ENCODE measurements at regions of chr11 and their contacts with region 1.

Region 1: GRCh38 chr11:1882519-1883238 is 9.0 kb downstream of the PRR33 start:
- DNase-seq: peak; percentile 69 to 79 (median 72)
- H3K4me3 ChIP-seq: no peak overlapping the region
- H3K4me3 Mint-ChIP-seq: no peak overlapping the region
- H3K27ac ChIP-seq: peak overlapping the region; percentile 20
- H3K27ac Mint-ChIP-seq: peak overlapping the region in 3 of 7 donors; percentile 47 to 64 (median 61)
- H3K4me1 ChIP-seq: peaks cover 23% of the 10 kb centered on the region
- H3K4me1 Mint-ChIP-seq: peaks cover 3 to 16% (median 8%) of the 10 kb centered on the region in 4 donors
- H3K27me3 ChIP-seq: no peaks in the 10 kb centered on the region
- H3K27me3 Mint-ChIP-seq: no peaks in the 10 kb centered on the region

Region 2: GRCh38 chr11:1335811-1336761 is 546.6 kb before region 1 on chr11:
- CTCF ChIA-PET with region 1: no interaction called
- POLR2A ChIA-PET with region 1: no interaction called
- intact Hi-C with region 1: no loop called
- DNase-seq: peak; percentile 44 to 75 (median 55)
- H3K4me3 ChIP-seq: peak overlapping the region; percentile 38 to 39
- H3K4me3 Mint-ChIP-seq: peak overlapping the region; percentile 71 to 89 (median 80)
- H3K27ac ChIP-seq: peak overlapping the region; percentile 27
- H3K27ac Mint-ChIP-seq: peak overlapping the region; percentile 49 to 92 (median 79)
- H3K4me1 ChIP-seq: peaks cover 12% of the 10 kb centered on the region
- H3K4me1 Mint-ChIP-seq: peaks cover 9 to 12% (median 11%) of the 10 kb centered on the region in 4 donors
- H3K27me3 ChIP-seq: no peaks in the 10 kb centered on the region
- H3K27me3 Mint-ChIP-seq: peaks cover 0 to 3% of the 10 kb centered on the region in 2 donors

Region 3: GRCh38 chr11:1844221-1845094 is 38.2 kb before region 1 on chr11:
- CTCF ChIA-PET with region 1: interaction called, 12 read pairs
- POLR2A ChIA-PET with region 1: interaction called, 189 read pairs
- intact Hi-C with region 1: no loop called
- DNase-seq: peak; percentile 41 to 77 (median 44)
- H3K4me3 ChIP-seq: peak overlapping the region; percentile 21 to 60
- H3K4me3 Mint-ChIP-seq: peak overlapping the region; percentile 64 to 90 (median 80)
- H3K27ac ChIP-seq: peak overlapping the region; percentile 43
- H3K27ac Mint-ChIP-seq: peak overlapping the region; percentile 87 to 97 (median 94)
- H3K4me1 ChIP-seq: peaks cover 64% of the 10 kb centered on the region
- H3K4me1 Mint-ChIP-seq: peaks cover 34 to 75% (median 49%) of the 10 kb centered on the region in 4 donors
- H3K27me3 ChIP-seq: no peaks in the 10 kb centered on the region
- H3K27me3 Mint-ChIP-seq: no peaks in the 10 kb centered on the region

Region 4: DNA sequence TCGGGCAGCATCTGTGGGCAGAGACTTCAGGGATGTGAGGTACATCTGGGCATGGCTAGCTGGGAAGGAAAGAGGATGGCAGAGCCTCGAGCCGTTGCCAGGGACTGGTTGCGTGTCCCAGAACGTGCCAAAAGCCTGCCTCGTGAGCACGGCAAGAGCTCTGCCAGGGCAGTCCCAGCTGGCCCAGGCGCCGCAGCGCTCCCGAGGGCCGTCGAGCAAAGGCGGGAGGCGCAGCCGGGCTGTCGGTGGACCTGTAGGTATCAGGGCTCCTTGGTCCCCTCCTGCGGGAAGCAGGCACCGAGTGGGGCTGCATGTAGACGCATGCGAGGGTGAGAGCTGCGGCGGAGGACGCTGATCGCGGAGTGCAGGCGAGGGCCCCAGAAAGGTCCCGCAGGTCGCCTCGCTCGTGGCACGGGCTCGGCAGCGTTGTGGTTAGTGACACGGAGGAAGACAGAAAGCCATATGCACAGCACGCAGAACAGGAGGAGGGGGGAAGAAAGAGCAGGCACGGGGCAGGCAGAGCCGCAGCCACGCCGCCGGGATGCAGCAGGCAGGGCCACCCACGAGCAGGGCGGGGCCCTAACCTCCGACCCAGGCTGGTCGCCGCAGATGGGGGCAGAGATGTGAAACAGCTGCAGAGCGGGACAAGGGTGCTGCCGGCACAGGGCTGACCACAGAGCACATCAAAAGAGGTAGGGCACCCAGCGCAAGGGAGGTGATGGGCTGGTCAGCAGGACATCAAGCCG is 11.8 kb before region 1 on chr11:
- CTCF ChIA-PET with region 1: interaction called, 10 read pairs
- POLR2A ChIA-PET with region 1: interaction called, 12 read pairs
- intact Hi-C with region 1: no loop called
- DNase-seq: peak; percentile 55 to 75 (median 65)
- H3K4me3 ChIP-seq: no peak overlapping the region
- H3K4me3 Mint-ChIP-seq: peak overlapping the region; percentile 72 to 91 (median 82)
- H3K27ac ChIP-seq: peak overlapping the region; percentile 28
- H3K27ac Mint-ChIP-seq: peak overlapping the region; percentile 84 to 97 (median 91)
- H3K4me1 ChIP-seq: peaks cover 65% of the 10 kb centered on the region
- H3K4me1 Mint-ChIP-seq: peaks cover 30 to 74% (median 54%) of the 10 kb centered on the region in 4 donors
- H3K27me3 ChIP-seq: no peaks in the 10 kb centered on the region
- H3K27me3 Mint-ChIP-seq: no peaks in the 10 kb centered on the region

Region 5: GRCh38 chr11:1946812-1947484 is 64.3 kb after region 1 on chr11 and contains the start of gene MRPL23:
- CTCF ChIA-PET with region 1: interaction called, 12 read pairs
- POLR2A ChIA-PET with region 1: interaction called, 3 read pairs
- intact Hi-C with region 1: no loop called
- DNase-seq: peak in 4 of 5 donors; percentile 18 to 58 (median 56)
- H3K4me3 ChIP-seq: no peak within 1 kb of the TSS
- H3K4me3 Mint-ChIP-seq: no peak within 1 kb of the TSS
- H3K27ac ChIP-seq: no peak within 1 kb of the TSS
- H3K27ac Mint-ChIP-seq: no peak within 1 kb of the TSS
- H3K4me1 ChIP-seq: no peaks in the 10 kb centered on the region
- H3K4me1 Mint-ChIP-seq: peaks cover 0 to 7% (median 5%) of the 10 kb centered on the region in 4 donors
- H3K27me3 ChIP-seq: no peaks in the 10 kb centered on the region
- H3K27me3 Mint-ChIP-seq: no peaks in the 10 kb centered on the region
- total RNA-seq, gene MRPL23: 43.9 to 51.0 TPM